ENCODE measurements at regions of chr11 and their contacts with region 1.

Region 1: GRCh38 chr11:62787005-62787759 is at the start of gene TMEM179B:
- DNase-seq: peak; percentile 87
- ATAC-seq: peak; percentile 71
- H3K4me3 Mint-ChIP-seq: peak within 1 kb of the TSS; percentile 92
- H3K27ac Mint-ChIP-seq: peak within 1 kb of the TSS; percentile 89
- H3K4me1 Mint-ChIP-seq: peaks cover 42% of the 10 kb centered on the region
- H3K27me3 Mint-ChIP-seq: no peaks in the 10 kb centered on the region
- CTCF ChIP-seq: peak; percentile 66
- total RNA-seq, gene TMEM179B: 34.9 and 47.7 TPM in 2 replicates

Region 2: DNA sequence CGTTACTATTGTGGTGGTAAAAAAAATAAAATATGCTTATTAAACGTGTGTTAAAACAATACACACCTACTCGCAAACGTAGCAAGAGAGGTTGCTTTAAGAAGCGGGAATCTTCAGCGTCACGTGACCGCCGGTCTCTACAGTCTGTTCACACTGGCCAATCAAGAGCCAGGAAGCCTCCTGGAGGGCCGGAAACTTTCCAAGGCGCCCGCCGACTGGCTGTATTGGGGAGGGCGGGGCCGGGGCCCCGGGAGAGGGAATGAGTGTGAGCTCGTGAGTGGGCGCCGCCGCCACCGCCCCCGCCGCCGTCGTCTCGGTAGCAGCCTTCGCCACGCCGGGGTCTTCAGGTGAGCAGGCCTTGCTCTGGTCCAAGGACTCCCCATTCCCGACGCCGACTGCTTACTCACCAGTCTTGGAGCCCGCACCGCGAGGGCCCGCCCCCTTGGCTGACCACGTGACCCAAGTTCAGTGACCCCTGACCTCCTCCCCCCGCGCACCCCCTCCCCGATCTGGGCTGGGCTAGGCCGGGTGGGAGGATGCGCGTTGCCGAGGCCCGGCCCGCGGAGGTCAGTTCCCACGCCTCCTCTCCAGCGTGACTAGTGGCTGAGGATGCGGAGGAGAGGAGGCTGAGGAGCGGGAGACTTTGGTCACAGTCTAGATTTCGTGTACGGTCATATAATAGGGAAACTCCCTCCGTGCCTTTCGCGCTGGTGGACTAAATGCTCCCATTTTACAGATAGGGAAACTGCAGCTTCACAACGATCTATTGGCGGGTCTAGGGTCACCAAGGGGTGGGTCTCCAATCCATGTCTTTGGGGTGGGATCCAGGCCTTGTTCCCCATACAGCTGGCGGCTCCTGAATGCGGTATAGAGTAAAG is 15.8 kb before region 1 on chr11 and contains the start of gene TAF6L:
- CTCF ChIA-PET with region 1: interaction called, 45 read pairs
- POLR2A ChIA-PET with region 1: interaction called, 46 read pairs
- intact Hi-C with region 1: loop called (anchors 1 kb)
- DNase-seq: peak; percentile 81
- ATAC-seq: peak; percentile 88
- H3K4me3 Mint-ChIP-seq: peak within 1 kb of the TSS; percentile 92
- H3K27ac Mint-ChIP-seq: peak within 1 kb of the TSS; percentile 94
- H3K4me1 Mint-ChIP-seq: peaks cover 28% of the 10 kb centered on the region
- H3K27me3 Mint-ChIP-seq: no peaks in the 10 kb centered on the region
- CTCF ChIP-seq: no peak
- total RNA-seq, gene TAF6L: 32.9 and 38.6 TPM in 2 replicates

Region 3: DNA sequence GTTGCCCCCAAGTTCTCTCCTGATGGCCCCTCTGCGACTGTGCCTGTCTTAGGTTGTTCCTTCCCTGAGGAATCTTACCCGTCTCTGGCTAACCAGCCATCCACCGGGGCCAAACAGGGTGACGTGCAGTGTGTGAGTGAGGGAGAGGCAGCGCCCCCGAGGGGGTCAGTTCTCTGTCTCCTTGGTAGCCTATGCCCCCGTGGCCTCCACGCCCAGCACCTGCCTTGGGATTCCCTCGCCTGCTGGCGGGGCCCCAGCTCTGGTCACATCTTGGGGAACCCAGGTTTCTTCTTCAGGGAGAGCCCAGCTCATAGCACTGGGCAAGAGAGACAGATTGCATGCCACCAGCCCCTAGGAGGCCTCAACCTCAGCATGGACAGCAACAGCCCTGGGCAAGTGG is 12.3 kb after region 1 on chr11:
- CTCF ChIA-PET with region 1: interaction called, 7 read pairs
- POLR2A ChIA-PET with region 1: interaction called, 15 read pairs
- intact Hi-C with region 1: no loop called
- DNase-seq: no peak
- ATAC-seq: no peak
- H3K4me3 Mint-ChIP-seq: no peak overlapping the region
- H3K27ac Mint-ChIP-seq: no peak overlapping the region
- H3K4me1 Mint-ChIP-seq: peaks cover 19% of the 10 kb centered on the region
- H3K27me3 Mint-ChIP-seq: no peaks in the 10 kb centered on the region
- CTCF ChIP-seq: no peak

Region 4: DNA sequence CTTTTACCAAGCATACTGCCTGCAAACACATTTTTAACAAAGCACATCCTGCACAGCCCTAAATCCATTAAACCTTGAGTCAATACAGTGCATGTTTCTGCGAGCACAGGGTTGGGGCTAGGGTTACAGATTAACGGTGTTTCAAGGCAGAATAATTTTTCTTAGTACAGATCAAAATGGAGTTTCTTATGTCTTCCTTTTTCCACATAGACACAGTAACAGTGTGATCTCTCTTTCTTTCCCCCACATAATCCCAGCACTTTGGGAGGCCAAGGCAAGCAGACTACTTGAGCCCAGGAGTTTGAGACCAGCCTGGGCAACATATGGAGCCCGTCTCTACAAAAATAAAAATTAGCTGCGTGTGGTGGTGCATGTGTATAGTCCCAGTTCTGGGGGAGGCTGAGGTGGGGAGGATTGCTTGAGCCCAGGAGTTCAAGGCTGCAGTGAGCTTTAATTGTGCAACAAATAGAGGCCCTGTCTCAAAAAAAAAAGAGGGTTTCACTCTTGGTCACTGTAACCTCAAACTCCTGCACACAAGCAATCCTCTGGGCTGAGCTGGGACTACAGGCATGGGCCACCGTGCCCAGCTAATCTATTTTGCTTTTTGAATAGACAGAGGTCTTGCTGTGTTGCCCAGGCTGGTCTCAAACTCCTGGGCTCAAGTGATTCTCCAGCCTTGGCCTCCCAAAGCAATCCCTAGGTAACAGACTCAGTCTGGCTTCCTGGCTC is 73.8 kb after region 1 on chr11:
- CTCF ChIA-PET with region 1: interaction called, 66 read pairs
- POLR2A ChIA-PET with region 1: interaction called, 93 read pairs
- intact Hi-C with region 1: loop called (anchors 1 kb)
- DNase-seq: no peak
- ATAC-seq: no peak
- H3K4me3 Mint-ChIP-seq: no peak overlapping the region
- H3K27ac Mint-ChIP-seq: no peak overlapping the region
- H3K4me1 Mint-ChIP-seq: peaks cover 24% of the 10 kb centered on the region
- H3K27me3 Mint-ChIP-seq: no peaks in the 10 kb centered on the region
- CTCF ChIP-seq: no peak